ENCODE measurements at regions of chr5 and their contacts with region 1.

Region 1: GRCh38 chr5:136087961-136088871 is 44.4 kb upstream of the SMAD5 start:
- DNase-seq: no peak
- H3K4me3 ChIP-seq: peak overlapping the region in 2 of 4 donors; percentile 11 to 13
- H3K27ac ChIP-seq: peak overlapping the region; percentile 69 to 83 (median 72)
- H3K4me1 ChIP-seq: peaks cover 31 to 41% (median 32%) of the 10 kb centered on the region in 4 donors
- H3K27me3 ChIP-seq: no peaks in the 10 kb centered on the region
- CTCF ChIP-seq: no peak
- EP300 ChIP-seq: no peak
- POLR2A ChIP-seq: no peak

Region 2: GRCh38 chr5:136132557-136133221 is 44.5 kb after region 1 on chr5 and contains the start of gene SMAD5:
- intact Hi-C with region 1: loop called (anchors 5 kb)
- DNase-seq: peak; percentile 98
- H3K4me3 ChIP-seq: peak within 1 kb of the TSS; percentile 80 to 92 (median 88)
- H3K27ac ChIP-seq: peak within 1 kb of the TSS; percentile 98
- H3K4me1 ChIP-seq: peaks cover 25 to 46% (median 45%) of the 10 kb centered on the region in 4 donors
- H3K27me3 ChIP-seq: no peaks in the 10 kb centered on the region
- CTCF ChIP-seq: no peak
- EP300 ChIP-seq: no peak
- POLR2A ChIP-seq: peak; percentile 75
- total RNA-seq, gene SMAD5: 42.4 to 47.9 (median 46.3) TPM